ENCODE measurements at regions of chr5 and their contacts with region 1.

Region 1: DNA sequence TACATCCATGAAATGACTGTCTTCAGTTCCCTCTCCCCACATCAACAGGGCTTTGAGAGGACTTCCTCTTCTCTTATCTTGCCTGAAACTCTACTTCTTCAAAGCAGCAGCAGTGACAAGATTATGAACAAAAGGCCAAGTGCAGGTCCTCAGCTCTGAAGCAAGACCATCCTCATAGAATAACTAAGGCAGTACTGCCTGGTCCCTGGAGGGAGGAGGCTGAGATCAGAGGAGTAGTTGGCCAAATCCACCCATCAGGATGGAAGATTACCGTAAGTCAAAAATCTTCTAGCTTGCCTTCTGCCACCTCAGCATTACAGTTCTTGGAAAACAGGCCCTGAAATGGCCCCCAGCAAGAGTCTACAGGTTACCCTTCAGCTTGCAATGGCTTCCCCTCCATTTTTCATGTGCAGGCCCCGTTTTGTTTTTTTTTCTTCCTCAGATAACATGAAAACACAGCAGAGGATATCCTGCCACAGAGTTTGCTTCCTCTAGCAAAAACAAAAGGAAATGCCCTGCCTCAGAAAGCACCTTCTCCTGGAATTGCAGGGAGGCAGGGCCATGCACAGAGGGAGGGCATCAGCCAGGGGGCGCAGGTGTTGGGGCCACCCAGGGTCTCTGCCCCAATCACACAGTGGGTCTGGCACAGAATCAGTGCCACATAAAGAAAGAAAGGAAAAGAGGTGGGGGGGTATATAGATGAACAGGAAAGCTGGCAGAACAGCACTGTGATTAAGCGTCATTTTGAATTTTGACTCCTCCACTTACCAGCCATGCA is 40.0 kb downstream of the KLHL3 start:
- DNase-seq: peak; percentile 29
- H3K4me3 Mint-ChIP-seq: peak overlapping the region; percentile 42
- H3K27ac Mint-ChIP-seq: peak overlapping the region; percentile 86
- H3K4me1 Mint-ChIP-seq: peaks cover 41% of the 10 kb centered on the region
- H3K27me3 Mint-ChIP-seq: no peaks in the 10 kb centered on the region

Region 2: GRCh38 chr5:137735555-137736284 is 39.9 kb after region 1 on chr5 and contains the start of gene KLHL3:
- CTCF ChIA-PET with region 1: interaction called, 36 read pairs
- POLR2A ChIA-PET with region 1: interaction called, 4 read pairs
- intact Hi-C with region 1: loop called (anchors 1 kb)
- DNase-seq: peak; percentile 50
- H3K4me3 Mint-ChIP-seq: no peak within 1 kb of the TSS
- H3K27ac Mint-ChIP-seq: no peak within 1 kb of the TSS
- H3K4me1 Mint-ChIP-seq: peaks cover 31% of the 10 kb centered on the region
- H3K27me3 Mint-ChIP-seq: no peaks in the 10 kb centered on the region
- total RNA-seq, gene KLHL3: 3.0 to 3.4 TPM

Region 3: GRCh38 chr5:137743031-137743640 is 47.3 kb after region 1 on chr5:
- CTCF ChIA-PET with region 1: interaction called, 36 read pairs
- POLR2A ChIA-PET with region 1: interaction called, 5 read pairs
- intact Hi-C with region 1: no loop called
- DNase-seq: peak; percentile 57
- H3K4me3 Mint-ChIP-seq: no peak overlapping the region
- H3K27ac Mint-ChIP-seq: no peak overlapping the region
- H3K4me1 Mint-ChIP-seq: peaks cover 7% of the 10 kb centered on the region
- H3K27me3 Mint-ChIP-seq: no peaks in the 10 kb centered on the region

Region 4: DNA sequence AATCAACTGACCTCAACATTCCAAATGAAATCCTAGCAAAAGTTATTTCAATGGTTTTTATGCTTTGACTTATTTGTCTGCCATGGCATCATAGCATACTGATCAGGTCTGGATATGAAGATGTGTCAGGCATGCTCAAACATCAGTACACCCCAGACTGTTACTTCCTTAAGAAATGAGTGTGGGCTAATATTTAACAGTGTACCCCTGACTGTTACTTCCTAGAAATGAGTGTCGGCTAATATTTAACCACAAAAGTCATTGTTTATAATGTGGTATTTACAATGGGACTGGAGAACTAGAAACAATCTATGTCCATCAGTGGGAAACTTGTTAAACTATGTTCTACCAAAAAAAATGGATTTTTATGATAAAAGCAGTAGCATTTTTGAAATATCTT is 96.5 kb after region 1 on chr5:
- CTCF ChIA-PET with region 1: no interaction called
- POLR2A ChIA-PET with region 1: no interaction called
- intact Hi-C with region 1: no loop called
- DNase-seq: no peak
- H3K4me3 Mint-ChIP-seq: no peak overlapping the region
- H3K27ac Mint-ChIP-seq: no peak overlapping the region
- H3K4me1 Mint-ChIP-seq: no peaks in the 10 kb centered on the region
- H3K27me3 Mint-ChIP-seq: peaks cover 2% of the 10 kb centered on the region

Measured in activated CD4-positive, alpha-beta memory T cell treated with anti-CD3 and anti-CD28 coated beads for 36 hours (primary cell).